PC-9 (cell line): ENCODE measurements at regions of chr7 and their contacts with region 1.

Region 1: DNA sequence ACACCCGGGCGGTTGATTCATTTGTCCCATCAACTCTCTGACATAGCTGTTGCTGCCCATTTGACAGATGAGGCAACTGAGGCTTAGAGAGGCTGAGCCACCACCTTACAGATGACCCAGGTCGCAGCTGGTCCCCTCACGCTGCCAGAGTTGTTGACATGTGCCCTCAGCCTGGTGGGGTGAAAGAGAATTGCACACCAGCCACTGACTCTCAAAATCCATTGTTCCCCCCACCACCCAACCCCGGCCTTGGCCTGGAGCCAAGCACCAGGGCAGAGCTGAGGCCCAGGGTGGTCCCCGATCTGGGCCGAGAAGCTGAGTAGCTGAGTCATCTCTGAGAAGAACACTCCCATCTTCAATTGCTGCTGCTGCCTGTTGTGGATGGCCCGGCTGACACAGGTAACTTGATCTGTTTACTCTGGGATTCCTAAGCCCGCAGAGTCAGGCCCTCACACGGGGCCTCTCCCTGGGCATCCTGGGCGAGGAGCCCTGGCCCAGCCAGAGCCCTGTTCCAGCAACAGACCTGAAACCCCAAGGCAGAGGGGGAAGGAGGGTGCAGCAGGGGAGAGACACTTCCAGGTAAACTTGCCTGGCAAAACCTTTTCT is 27.5 kb downstream of the PVRIG start:
- DNase-seq: peak; percentile 94 to 97
- H3K4me3 ChIP-seq: no peak overlapping the region
- H3K27ac ChIP-seq: peak overlapping the region; percentile 57
- H3K4me1 ChIP-seq: peaks cover 46% of the 10 kb centered on the region
- H3K27me3 ChIP-seq: no peaks in the 10 kb centered on the region
- CTCF ChIP-seq: no peak

Region 2: GRCh38 chr7:100185726-100186125 is 61.5 kb before region 1 on chr7:
- CTCF ChIA-PET with region 1: interaction called, 3 read pairs
- POLR2A ChIA-PET with region 1: interaction called, 21 read pairs
- intact Hi-C with region 1: no loop called
- DNase-seq: no peak
- H3K4me3 ChIP-seq: no peak overlapping the region
- H3K27ac ChIP-seq: no peak overlapping the region
- H3K4me1 ChIP-seq: peaks cover 1% of the 10 kb centered on the region; the same call in 1 of the 2 replicates
- H3K27me3 ChIP-seq: no peaks in the 10 kb centered on the region
- CTCF ChIP-seq: no peak

Region 3: DNA sequence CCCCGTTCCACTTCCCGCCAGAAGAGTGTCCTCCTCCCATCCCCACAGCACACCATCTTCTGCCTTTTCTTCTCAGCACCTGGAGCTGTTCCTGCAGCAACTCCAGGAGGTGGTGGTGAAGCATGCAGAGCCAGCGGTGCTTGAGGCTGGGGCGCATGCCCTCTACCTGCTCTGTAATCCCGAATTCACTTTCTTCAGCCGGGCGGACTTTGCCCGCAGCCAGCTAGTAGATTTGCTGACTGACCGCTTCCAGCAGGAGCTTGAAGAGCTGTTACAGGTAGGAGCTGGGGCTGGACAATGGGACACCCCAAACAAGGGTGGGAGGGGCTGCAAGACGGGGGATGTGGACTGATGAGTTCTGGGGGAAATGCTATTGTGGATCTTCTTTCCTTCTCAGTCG is 46.6 kb before region 1 on chr7:
- CTCF ChIA-PET with region 1: no interaction called
- POLR2A ChIA-PET with region 1: no interaction called
- intact Hi-C with region 1: no loop called
- DNase-seq: no peak
- H3K4me3 ChIP-seq: no peak overlapping the region
- H3K27ac ChIP-seq: no peak overlapping the region
- H3K4me1 ChIP-seq: no peaks in the 10 kb centered on the region
- H3K27me3 ChIP-seq: no peaks in the 10 kb centered on the region
- CTCF ChIP-seq: no peak

Region 4: GRCh38 chr7:100266576-100267354 is 19.5 kb after region 1 on chr7:
- CTCF ChIA-PET with region 1: no interaction called
- POLR2A ChIA-PET with region 1: no interaction called
- intact Hi-C with region 1: loop called (anchors 1 kb)
- DNase-seq: no peak
- H3K4me3 ChIP-seq: no peak overlapping the region
- H3K27ac ChIP-seq: no peak overlapping the region
- H3K4me1 ChIP-seq: peaks cover 63% of the 10 kb centered on the region
- H3K27me3 ChIP-seq: no peaks in the 10 kb centered on the region
- CTCF ChIP-seq: no peak

Region 5: GRCh38 chr7:100342765-100343164 is 95.5 kb after region 1 on chr7:
- CTCF ChIA-PET with region 1: interaction called, 3 read pairs
- POLR2A ChIA-PET with region 1: no interaction called
- intact Hi-C with region 1: loop called (anchors 2 kb)
- DNase-seq: no peak
- H3K4me3 ChIP-seq: no peak overlapping the region
- H3K27ac ChIP-seq: no peak overlapping the region
- H3K4me1 ChIP-seq: peaks cover 60% of the 10 kb centered on the region
- H3K27me3 ChIP-seq: no peaks in the 10 kb centered on the region
- CTCF ChIP-seq: no peak